ENCODE measurements at regions of chr16 and their contacts with region 1.

Region 1: DNA sequence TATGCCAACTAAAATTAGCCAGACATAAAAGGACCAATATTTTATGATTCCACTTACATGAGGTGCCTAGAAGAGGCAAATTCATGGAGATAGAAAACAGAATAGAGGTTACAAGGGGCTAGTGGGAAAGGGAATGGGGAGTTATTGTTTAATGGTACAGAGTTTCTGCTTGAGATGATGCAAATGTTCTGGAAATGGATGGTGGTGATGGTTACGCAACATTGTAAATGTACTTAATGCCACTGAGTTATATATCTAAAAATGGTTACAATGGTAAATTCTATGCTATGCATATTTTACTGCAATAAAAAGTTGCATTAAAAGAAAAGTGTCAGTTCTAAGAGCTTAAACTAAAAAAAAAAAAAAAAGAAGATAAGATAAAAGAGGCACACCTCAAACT is 17.9 kb downstream of the MT1X start:
- DNase-seq: peak; percentile 49
- H3K4me3 Mint-ChIP-seq: no peak overlapping the region
- H3K27ac Mint-ChIP-seq: peak overlapping the region; percentile 16
- H3K4me1 Mint-ChIP-seq: peaks cover 10% of the 10 kb centered on the region
- H3K27me3 Mint-ChIP-seq: no peaks in the 10 kb centered on the region
- CTCF ChIP-seq: no peak

Region 2: DNA sequence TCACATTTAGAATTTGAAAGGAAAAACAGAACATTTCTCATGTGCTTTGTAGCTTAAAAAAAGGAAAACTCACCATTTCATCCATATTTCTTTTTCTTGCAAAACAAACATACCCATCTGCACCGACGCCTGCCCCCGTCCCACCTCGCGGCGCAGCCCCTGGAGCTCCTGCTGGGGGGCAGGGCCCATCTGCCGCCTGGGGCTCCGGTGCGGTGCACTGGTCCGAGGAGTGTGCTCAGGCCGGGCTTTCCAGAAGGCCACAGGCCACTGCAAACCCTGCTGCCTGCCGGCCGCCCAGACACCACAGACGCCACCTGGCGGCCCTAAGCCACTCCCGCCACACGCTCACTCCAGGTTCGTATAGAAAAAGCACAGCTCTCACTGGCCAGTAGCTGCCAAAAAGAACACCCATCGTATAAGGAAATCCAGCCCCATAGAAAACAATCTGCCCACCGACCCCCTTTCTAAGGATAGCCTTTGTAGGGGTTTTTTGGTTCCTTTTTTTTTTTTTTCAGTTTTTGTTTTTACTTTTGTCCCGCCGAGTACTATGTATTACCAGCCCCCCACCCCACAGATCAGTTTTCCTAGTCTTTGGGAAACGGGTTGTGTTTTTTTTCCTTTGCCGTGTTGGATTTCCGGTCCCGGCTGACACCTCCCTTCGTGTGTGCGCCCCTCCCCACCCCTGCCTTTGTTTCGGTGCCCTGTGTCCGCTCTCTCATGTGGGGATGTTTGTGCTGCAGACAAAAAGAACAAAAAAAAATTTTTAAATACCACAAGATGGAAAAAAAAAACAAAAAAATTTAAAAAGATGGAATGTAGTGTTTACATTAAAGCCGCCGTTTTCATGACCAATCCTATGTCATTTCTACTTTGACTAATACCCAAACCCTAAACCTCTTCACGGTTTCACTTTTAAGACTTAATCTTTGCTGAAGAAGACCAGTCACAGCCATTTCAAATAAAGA is 343.6 kb before region 1 on chr16:
- CTCF ChIA-PET with region 1: no interaction called
- POLR2A ChIA-PET with region 1: no interaction called
- intact Hi-C with region 1: loop called (anchors 1 kb)
- DNase-seq: peak; percentile 83
- H3K4me3 Mint-ChIP-seq: peak overlapping the region; percentile 46
- H3K27ac Mint-ChIP-seq: no peak overlapping the region
- H3K4me1 Mint-ChIP-seq: peaks cover 8% of the 10 kb centered on the region
- H3K27me3 Mint-ChIP-seq: peaks cover 10% of the 10 kb centered on the region
- CTCF ChIP-seq: peak; percentile 76

Region 3: GRCh38 chr16:56519459-56520250 is 180.5 kb before region 1 on chr16 and contains the start of gene BBS2:
- CTCF ChIA-PET with region 1: interaction called, 40 read pairs
- POLR2A ChIA-PET with region 1: interaction called, 11 read pairs
- intact Hi-C with region 1: loop called (anchors 1 kb)
- DNase-seq: peak; percentile 83
- H3K4me3 Mint-ChIP-seq: peak within 1 kb of the TSS; percentile 81
- H3K27ac Mint-ChIP-seq: peak within 1 kb of the TSS; percentile 83
- H3K4me1 Mint-ChIP-seq: peaks cover 29% of the 10 kb centered on the region
- H3K27me3 Mint-ChIP-seq: no peaks in the 10 kb centered on the region
- CTCF ChIP-seq: no peak
- total RNA-seq, gene BBS2: 23.9 and 25.8 TPM in 2 replicates

Region 4: GRCh38 chr16:56608043-56608875 is 91.9 kb before region 1 on chr16 and contains the start of gene MT2A:
- CTCF ChIA-PET with region 1: interaction called, 105 read pairs
- POLR2A ChIA-PET with region 1: interaction called, 75 read pairs
- intact Hi-C with region 1: loop called (anchors 1 kb)
- DNase-seq: peak; percentile 97
- H3K4me3 Mint-ChIP-seq: peak within 1 kb of the TSS; percentile 93
- H3K27ac Mint-ChIP-seq: peak within 1 kb of the TSS; percentile 99
- H3K4me1 Mint-ChIP-seq: peaks cover 50% of the 10 kb centered on the region
- H3K27me3 Mint-ChIP-seq: no peaks in the 10 kb centered on the region
- CTCF ChIP-seq: no peak
- total RNA-seq, gene MT2A: 2,490 and 3,582 TPM in 2 replicates

Region 5: DNA sequence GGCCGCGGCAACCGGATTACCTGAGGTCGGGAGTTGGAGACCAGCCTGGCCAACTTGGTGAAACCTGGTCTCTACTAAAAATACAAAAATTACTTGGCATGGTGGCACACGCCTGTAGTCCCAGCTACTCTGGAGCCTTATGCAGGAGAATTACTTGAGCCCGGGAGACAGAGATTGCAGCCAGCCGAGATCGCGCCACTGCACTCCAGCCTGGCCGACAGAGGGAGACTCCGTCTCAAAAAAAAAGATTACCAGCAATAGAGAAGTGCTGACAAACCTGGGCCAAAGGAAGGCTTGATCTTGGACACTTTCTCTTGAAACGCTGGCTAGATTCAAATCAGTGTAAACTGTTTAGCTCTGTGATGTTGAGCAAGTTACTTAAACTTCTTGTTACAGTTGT is 26.3 kb before region 1 on chr16:
- CTCF ChIA-PET with region 1: interaction called, 13 read pairs
- POLR2A ChIA-PET with region 1: interaction called, 5 read pairs
- intact Hi-C with region 1: loop called (anchors 1 kb)
- DNase-seq: no peak
- H3K4me3 Mint-ChIP-seq: no peak overlapping the region
- H3K27ac Mint-ChIP-seq: no peak overlapping the region
- H3K4me1 Mint-ChIP-seq: no peaks in the 10 kb centered on the region
- H3K27me3 Mint-ChIP-seq: peaks cover 1% of the 10 kb centered on the region
- CTCF ChIP-seq: peak; percentile 28

Region 6: GRCh38 chr16:56789360-56789759 is 89.2 kb after region 1 on chr16:
- CTCF ChIA-PET with region 1: interaction called, 6 read pairs
- POLR2A ChIA-PET with region 1: interaction called, 3 read pairs
- intact Hi-C with region 1: loop called (anchors 1 kb)
- DNase-seq: peak; percentile 68
- H3K4me3 Mint-ChIP-seq: no peak overlapping the region
- H3K27ac Mint-ChIP-seq: no peak overlapping the region
- H3K4me1 Mint-ChIP-seq: no peaks in the 10 kb centered on the region
- H3K27me3 Mint-ChIP-seq: no peaks in the 10 kb centered on the region
- CTCF ChIP-seq: peak; percentile 49

Region 7: GRCh38 chr16:56836410-56837230 is 136.4 kb after region 1 on chr16:
- CTCF ChIA-PET with region 1: no interaction called
- POLR2A ChIA-PET with region 1: no interaction called
- intact Hi-C with region 1: no loop called
- DNase-seq: no peak
- H3K4me3 Mint-ChIP-seq: no peak overlapping the region
- H3K27ac Mint-ChIP-seq: no peak overlapping the region
- H3K4me1 Mint-ChIP-seq: peaks cover 4% of the 10 kb centered on the region
- H3K27me3 Mint-ChIP-seq: no peaks in the 10 kb centered on the region
- CTCF ChIP-seq: no peak

Region 8: DNA sequence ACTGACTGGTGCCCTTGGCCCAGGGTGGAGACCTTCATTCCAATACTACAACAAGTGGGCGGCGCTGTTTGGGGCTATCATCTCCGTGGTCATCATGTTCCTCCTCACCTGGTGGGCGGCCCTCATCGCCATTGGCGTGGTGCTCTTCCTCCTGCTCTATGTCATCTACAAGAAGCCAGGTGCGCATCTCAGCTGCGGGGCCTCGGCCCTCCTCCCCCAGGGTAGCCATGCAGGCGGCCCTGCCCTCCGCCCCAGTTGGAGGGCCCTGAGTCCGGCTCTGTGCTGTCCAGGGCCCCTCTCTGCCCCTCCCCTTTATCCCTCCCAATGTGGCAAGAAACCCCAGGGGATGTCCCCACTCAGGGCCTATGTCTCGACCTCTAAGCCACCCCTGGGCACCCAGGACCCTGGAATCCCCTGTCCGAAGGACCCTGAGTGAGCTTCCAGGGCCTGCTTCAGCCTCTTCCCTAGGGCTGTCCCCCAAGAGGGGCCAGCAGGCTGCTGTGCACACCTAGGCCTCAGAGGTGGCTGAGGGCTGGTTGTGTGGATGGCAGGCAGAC is 183.9 kb after region 1 on chr16:
- CTCF ChIA-PET with region 1: no interaction called
- POLR2A ChIA-PET with region 1: no interaction called
- intact Hi-C with region 1: no loop called
- DNase-seq: no peak
- H3K4me3 Mint-ChIP-seq: no peak overlapping the region
- H3K27ac Mint-ChIP-seq: no peak overlapping the region
- H3K4me1 Mint-ChIP-seq: no peaks in the 10 kb centered on the region
- H3K27me3 Mint-ChIP-seq: no peaks in the 10 kb centered on the region
- CTCF ChIP-seq: no peak